Posterior cingulate gyrus (tissue), 11 donors: ENCODE measurements at regions of chr1 and their contacts with region 1.

Region 1: DNA sequence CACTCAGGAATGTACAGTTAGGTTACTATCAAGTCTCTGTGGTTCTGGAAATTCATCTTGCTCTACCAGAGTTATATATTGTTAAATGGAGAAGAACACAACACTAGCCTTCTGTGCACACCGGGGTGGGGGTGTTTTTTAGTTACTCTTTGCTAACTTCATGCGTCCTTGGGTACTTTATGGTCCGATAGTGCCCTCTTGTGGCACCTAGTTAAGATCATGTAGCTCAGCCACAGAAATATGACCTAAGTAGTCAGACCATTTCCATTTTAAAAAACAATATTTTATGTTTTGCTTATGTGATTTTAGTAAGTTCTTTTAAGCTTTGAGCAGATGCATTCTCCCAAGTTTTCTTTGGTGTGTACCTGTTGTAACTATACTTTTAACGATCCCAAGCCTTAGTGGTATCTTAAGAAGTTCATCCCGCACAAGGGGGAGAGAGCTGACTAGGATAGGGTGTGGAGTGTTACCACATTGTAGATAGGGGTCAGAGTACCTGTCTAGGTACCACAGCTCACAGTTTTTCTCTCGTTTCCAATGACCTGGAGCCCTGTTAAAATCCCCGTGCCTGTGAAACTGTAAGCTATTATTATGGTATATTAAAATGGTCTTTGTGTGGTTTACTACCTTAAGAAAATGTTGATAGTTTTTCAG is 20.6 kb upstream of the SH3D21 start:
- DNase-seq: peak in 5 of 10 donors; percentile 21 to 65 (median 43)

Region 2: DNA sequence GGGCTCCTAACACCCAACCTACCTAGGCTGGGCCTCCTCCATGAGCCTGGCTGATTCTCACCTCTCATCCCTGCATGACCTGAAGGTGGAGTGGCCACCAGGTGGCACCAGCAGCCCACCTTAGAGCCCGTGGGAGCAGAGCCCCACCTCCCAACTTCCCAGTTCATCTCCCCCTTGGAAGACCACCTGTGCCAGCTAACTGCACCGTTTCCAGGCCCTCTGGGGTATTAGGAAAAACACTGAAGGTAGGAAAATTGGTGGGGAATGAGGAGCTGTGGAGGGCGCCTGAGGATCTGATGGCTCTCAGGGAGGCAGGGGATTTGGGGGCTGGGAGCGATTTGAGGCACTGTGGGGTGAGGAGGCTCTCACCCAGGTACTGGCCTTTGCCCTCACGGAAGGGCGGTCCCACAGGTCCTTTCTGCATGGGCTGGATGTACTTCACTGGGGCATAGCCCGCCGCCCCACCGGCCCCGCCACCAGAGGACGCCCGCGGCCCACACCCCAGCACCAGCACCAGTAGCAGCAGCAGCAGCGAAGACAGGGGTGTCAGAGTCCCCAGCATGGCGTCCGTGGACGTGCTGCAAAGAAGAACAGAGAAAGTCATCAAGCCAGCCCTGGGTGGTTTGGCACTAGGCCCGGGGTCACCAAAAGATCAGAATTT is 185.8 kb before region 1 on chr1:
- intact Hi-C with region 1: loop called (anchors 5 kb)
- DNase-seq: peak; percentile 49 to 96 (median 82)

Region 3: GRCh38 chr1:36187800-36188593 is 97.6 kb before region 1 on chr1:
- intact Hi-C with region 1: loop called (anchors 1 kb)
- DNase-seq: peak; percentile 77 to 98 (median 88)

Region 4: GRCh38 chr1:36223993-36224536 is 61.5 kb before region 1 on chr1 and contains the start of gene THRAP3:
- intact Hi-C with region 1: loop called (anchors 10 kb)
- DNase-seq: peak; percentile 99 to 100 (median 100)